Esophagus muscularis mucosa (tissue), 4 donors: ENCODE measurements at regions of chrX and their contacts with region 1.

Region 1: DNA sequence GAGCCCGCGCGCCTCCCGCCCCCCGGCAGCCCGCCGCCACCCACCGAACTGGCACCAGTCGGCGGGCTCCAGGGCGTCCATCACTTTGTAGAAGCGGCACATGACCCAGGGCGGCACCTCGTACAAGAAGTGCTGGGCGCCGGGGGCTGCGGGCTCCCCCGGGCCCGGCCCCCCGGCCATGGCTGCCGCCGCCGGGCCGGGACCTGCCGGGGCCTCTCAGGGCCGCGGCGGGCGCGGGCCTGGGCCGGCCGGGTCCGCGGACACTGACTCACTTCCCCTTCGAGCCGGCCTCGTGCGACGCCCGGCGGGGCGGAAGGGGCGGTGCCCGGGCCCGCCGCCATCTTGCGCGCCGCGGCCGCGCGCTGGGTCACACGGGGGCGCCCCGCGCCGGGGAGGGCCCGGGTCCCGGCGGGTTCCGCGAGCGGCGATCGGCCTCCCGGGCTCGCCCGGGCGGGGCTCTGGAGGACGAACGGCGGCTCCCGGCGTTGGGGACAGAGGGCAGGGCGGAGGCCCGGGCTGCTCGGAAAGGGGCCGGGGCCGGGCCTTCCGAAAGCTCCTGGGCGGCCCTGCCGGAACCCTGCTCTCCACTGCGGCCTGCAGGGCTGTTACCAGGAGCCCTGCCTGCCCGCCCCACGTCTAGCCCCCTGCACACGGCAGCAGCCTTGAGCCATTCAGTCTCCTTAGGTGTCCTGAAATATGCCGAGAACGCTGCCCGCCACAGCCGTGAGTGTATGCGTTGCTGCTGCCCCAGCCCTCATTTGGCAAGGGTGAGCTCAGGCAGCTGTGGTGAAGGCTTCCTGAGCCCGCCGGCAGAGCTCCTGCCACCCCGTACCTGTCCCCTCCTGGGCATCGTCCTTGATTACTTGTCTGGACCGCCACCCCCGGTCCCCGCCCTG is at the start of gene IRAK1:
- DNase-seq: no peak
- H3K4me3 ChIP-seq: peak within 1 kb of the TSS; percentile 60 to 71 (median 63)
- H3K27ac ChIP-seq: peak within 1 kb of the TSS; percentile 84 to 90 (median 86)
- H3K4me1 ChIP-seq: peaks cover 6 to 39% (median 31%) of the 10 kb centered on the region in 4 donors
- H3K27me3 ChIP-seq: no peaks in the 10 kb centered on the region
- CTCF ChIP-seq: no peak
- EP300 ChIP-seq: no peak
- POLR2A ChIP-seq: no peak
- total RNA-seq, gene IRAK1: 50.5 to 74.9 (median 67.6) TPM

Region 2: GRCh38 chrX:153627675-153628111 is 392.2 kb before region 1 on chrX:
- intact Hi-C with region 1: no loop called
- DNase-seq: no peak
- H3K4me3 ChIP-seq: no peak overlapping the region
- H3K27ac ChIP-seq: no peak overlapping the region
- H3K4me1 ChIP-seq: no peaks in the 10 kb centered on the region
- H3K27me3 ChIP-seq: peaks cover 0 to 24% (median 3%) of the 10 kb centered on the region in 4 donors
- CTCF ChIP-seq: no peak
- EP300 ChIP-seq: no peak
- POLR2A ChIP-seq: no peak

Region 3: GRCh38 chrX:154051201-154051810 is 31.4 kb after region 1 on chrX:
- intact Hi-C with region 1: loop called (anchors 5 kb)
- DNase-seq: no peak
- H3K4me3 ChIP-seq: no peak overlapping the region
- H3K27ac ChIP-seq: peak overlapping the region in 3 of 4 donors; percentile 40 to 47 (median 43)
- H3K4me1 ChIP-seq: peaks cover 48 to 68% (median 66%) of the 10 kb centered on the region in 4 donors
- H3K27me3 ChIP-seq: no peaks in the 10 kb centered on the region
- CTCF ChIP-seq: peak; percentile 61 to 63 (median 62)
- EP300 ChIP-seq: no peak
- POLR2A ChIP-seq: no peak